K562 (cell line): ENCODE measurements at regions of chr4 and their contacts with region 1.

Region 1: GRCh38 chr4:59630235-59630634 is 1569.9 kb upstream of the ADGRL3 start:
- DNase-seq: no peak
- ATAC-seq: no peak
- H3K4me3 ChIP-seq: no peak overlapping the region
- H3K27ac ChIP-seq: no peak overlapping the region
- H3K4me1 ChIP-seq: no peaks in the 10 kb centered on the region
- H3K27me3 ChIP-seq: no peaks in the 10 kb centered on the region
- CTCF ChIP-seq: no peak
- EP300 ChIP-seq: no peak
- POLR2A ChIP-seq: no peak
- RAD21 ChIP-seq: no peak

Region 2: DNA sequence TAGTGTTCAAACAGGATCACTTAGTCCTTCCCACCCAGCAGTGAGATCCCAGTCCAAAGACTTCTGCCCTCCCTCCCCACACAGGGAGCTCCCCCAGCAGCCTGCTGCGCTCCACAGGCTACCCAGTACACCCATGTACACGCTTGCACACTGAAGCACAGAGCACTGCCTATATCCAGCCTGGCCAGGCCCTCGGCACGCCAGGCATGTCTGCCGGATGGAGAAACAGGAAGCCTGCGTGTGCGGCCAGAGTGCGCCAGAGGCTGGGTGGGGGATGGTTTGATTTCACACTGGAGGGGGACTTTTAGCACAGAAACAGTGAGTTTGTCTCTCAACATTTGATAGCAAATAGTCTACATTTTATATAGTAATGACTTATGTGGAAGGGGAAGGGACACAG is 1686.6 kb before region 1 on chr4:
- CTCF ChIA-PET with region 1: no interaction called
- POLR2A ChIA-PET with region 1: no interaction called
- in situ Hi-C with region 1: no loop called
- intact Hi-C with region 1: loop called (anchors 10 kb)
- DNase-seq: no peak
- ATAC-seq: no peak
- H3K4me3 ChIP-seq: no peak overlapping the region
- H3K27ac ChIP-seq: no peak overlapping the region
- H3K4me1 ChIP-seq: no peaks in the 10 kb centered on the region
- H3K27me3 ChIP-seq: no peaks in the 10 kb centered on the region
- CTCF ChIP-seq: no peak
- EP300 ChIP-seq: no peak
- POLR2A ChIP-seq: no peak
- RAD21 ChIP-seq: no peak

Region 3: GRCh38 chr4:59904339-59904738 is 274.1 kb after region 1 on chr4:
- CTCF ChIA-PET with region 1: no interaction called
- POLR2A ChIA-PET with region 1: no interaction called
- in situ Hi-C with region 1: no loop called
- intact Hi-C with region 1: no loop called
- DNase-seq: no peak
- ATAC-seq: no peak
- H3K4me3 ChIP-seq: no peak overlapping the region
- H3K27ac ChIP-seq: no peak overlapping the region
- H3K4me1 ChIP-seq: no peaks in the 10 kb centered on the region
- H3K27me3 ChIP-seq: no peaks in the 10 kb centered on the region
- CTCF ChIP-seq: no peak
- EP300 ChIP-seq: no peak
- POLR2A ChIP-seq: no peak
- RAD21 ChIP-seq: no peak